Activated B cell treated with CpG ODN at 0.5 μM for 24 hours (primary cell): ENCODE measurements at regions of chr5 and their contacts with region 1.

Region 1: DNA sequence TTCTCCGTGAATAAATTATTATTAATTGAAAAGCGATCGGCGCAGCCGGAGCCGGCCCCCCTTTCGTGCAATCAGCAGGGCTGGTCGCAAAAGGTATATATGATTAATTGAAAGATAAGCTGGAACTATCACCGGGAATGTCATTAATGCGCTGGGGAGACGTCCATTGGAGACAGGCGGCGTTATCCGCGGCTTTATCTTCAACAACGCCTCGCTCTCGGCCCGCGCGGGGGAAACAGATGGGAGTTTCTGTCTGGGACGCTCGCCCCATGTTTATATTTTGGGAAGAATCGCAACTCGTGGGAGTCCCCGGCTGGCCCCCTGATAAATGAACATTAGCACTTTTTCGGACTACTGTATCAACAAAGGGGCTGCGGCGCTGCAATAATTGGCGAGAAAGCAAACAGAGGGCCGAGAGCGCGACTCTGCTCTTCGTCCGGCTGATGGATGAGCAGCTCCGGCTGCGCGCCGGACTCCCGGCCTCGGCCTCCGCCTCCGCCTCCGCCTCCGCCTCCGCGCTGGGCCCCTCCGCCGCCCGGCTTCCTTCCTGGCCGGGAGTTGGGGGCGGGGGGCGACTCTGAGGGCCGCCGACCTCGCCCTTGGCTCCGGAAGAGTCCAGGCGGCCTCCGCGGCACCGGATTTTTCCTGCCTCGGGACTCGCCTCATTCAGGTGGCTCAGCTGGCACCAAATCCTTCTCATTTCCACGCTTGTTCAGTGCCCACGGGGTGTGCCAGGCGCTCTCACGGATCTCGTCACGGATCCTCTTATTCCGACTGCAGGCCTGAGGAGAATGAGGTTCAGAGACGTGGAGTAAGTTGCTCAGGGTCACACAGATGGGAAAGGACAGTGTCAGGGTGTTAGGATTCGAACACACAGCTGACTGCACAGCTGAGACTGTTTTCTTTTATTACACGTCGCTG is 3.6 kb upstream of the NKX2-5 start:
- DNase-seq: no peak
- ATAC-seq: no peak
- H3K4me3 Mint-ChIP-seq: peak overlapping the region; percentile 28
- H3K27ac Mint-ChIP-seq: no peak overlapping the region
- H3K4me1 Mint-ChIP-seq: peaks cover 32% of the 10 kb centered on the region
- H3K27me3 Mint-ChIP-seq: peaks cover 80% of the 10 kb centered on the region
- CTCF ChIP-seq: no peak

Region 2: GRCh38 chr5:171310819-171311697 is 1927.5 kb before region 1 on chr5:
- CTCF ChIA-PET with region 1: no interaction called
- POLR2A ChIA-PET with region 1: no interaction called
- intact Hi-C with region 1: loop called (anchors 5 kb)
- DNase-seq: no peak
- ATAC-seq: no peak
- H3K4me3 Mint-ChIP-seq: no peak overlapping the region
- H3K27ac Mint-ChIP-seq: no peak overlapping the region
- H3K4me1 Mint-ChIP-seq: peaks cover 17% of the 10 kb centered on the region
- H3K27me3 Mint-ChIP-seq: peaks cover 51% of the 10 kb centered on the region
- CTCF ChIP-seq: no peak